ENCODE measurements at regions of chr1 and their contacts with region 1.

Region 1: GRCh38 chr1:173669491-173669941 is at the start of gene ANKRD45:
- DNase-seq: peak; percentile 13
- H3K4me3 ChIP-seq: peak within 1 kb of the TSS; percentile 8 to 42
- H3K27ac ChIP-seq: no peak within 1 kb of the TSS
- H3K4me1 ChIP-seq: no peaks in the 10 kb centered on the region
- H3K27me3 ChIP-seq: no peaks in the 10 kb centered on the region
- CTCF ChIP-seq: no peak
- POLR2A ChIP-seq: no peak
- total RNA-seq, gene ANKRD45: 2.3 TPM in 1 of 2 donors, not detected in the other

Region 2: GRCh38 chr1:173507205-173507846 is 162.2 kb before region 1 on chr1:
- intact Hi-C with region 1: loop called (anchors 10 kb)
- DNase-seq: no peak
- H3K4me3 ChIP-seq: no peak overlapping the region
- H3K27ac ChIP-seq: no peak overlapping the region
- H3K4me1 ChIP-seq: no peaks in the 10 kb centered on the region
- H3K27me3 ChIP-seq: no peaks in the 10 kb centered on the region
- CTCF ChIP-seq: no peak
- POLR2A ChIP-seq: no peak

Region 3: DNA sequence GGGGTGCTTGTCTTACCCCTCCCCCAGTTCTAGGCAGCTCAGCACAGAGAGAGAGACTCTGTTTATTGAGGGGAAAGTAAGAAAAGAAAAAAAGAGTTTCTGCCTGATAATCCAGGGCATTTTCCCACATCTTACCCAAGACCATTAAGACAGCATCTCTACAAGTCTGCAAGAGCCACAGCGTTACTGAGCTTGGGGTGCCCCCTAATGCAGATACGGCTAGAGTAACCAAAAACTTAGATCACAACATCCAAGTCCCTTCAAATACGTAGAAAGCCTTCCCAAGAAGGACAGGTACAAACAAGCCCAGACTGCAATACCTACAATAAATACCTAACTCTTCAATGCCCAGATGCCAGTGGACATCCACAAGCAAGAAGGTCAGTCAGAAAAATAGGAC is 40.6 kb before region 1 on chr1:
- intact Hi-C with region 1: no loop called
- DNase-seq: no peak
- H3K4me3 ChIP-seq: no peak overlapping the region
- H3K27ac ChIP-seq: no peak overlapping the region
- H3K4me1 ChIP-seq: no peaks in the 10 kb centered on the region
- H3K27me3 ChIP-seq: no peaks in the 10 kb centered on the region
- CTCF ChIP-seq: no peak
- POLR2A ChIP-seq: no peak